Sciatic nerve (tissue), 2 donors: ENCODE measurements at regions of chr1 and their contacts with region 1.

Region 1: DNA sequence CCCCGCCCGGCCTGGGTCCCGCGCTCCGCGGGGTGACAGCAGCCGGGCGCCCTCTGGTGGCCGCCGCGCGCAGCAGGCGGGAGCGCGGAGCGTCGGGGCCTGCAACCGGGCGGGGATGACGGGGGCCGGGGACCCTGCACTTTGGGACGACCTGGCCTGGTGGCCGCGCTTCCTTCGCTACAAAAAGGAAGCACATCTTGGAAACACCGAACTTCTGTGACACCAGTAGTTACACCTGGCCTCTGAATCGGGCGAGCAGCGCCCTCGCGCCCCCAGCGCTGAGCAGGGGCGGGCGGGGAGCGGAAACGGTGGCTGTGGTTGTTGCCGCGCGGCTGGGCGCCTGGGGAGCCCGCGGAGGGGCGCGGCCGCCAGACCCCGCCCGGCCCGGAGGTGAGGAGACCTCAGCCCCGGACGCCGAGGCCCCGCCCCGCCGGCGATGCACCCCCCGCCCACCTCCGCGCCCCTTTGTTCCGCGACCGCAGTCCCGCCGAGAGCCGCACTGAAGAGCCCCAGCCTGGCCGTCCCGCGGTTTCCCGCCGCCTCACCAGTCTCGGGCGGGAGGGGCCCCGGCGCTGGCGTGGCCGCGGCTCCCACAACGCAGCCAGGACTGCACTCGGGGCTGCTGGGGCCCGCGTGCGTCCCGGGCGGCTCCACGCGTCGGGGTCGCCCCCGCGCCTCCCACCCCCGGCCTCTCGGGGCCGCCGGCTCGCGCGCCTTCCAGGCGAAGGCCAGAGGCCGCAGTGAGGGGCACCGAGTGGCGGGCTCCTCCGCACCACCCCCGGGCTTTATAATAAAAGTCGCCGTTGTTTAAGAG is 59.3 kb downstream of the H3-3A start:
- DNase-seq: peak; percentile 82
- ATAC-seq: peak; percentile 73

Region 2: GRCh38 chr1:225999227-225999911 is 122.4 kb before region 1 on chr1 and contains the start of gene SDE2:
- intact Hi-C with region 1: no loop called
- DNase-seq: peak; percentile 100
- ATAC-seq: peak; percentile 99
- total RNA-seq, gene SDE2: 22.3 TPM

Region 3: GRCh38 chr1:226064816-226065248 is 57.0 kb before region 1 on chr1:
- intact Hi-C with region 1: loop called (anchors 5 kb)
- DNase-seq: no peak
- ATAC-seq: no peak

Region 4: DNA sequence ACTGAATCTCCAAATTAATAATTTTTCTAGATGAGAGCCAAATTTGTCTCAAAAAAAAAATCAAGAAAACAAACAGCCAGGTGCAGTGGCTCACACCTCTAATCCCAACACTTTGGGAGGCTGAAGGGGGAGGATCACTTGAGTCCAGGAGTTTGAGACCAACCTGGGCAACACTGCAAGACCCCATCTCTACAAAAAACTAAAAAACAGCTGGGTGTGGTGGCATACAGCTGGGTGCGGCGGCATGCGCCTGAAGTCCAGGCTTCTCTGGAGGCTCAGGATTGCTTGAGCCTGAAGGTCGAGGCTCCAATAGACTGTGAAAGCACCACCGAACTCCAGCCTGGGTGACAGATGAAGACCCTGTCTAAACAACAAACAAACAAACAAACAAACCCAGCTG is 50.8 kb after region 1 on chr1:
- intact Hi-C with region 1: no loop called
- DNase-seq: no peak
- ATAC-seq: no peak

Region 5: GRCh38 chr1:226186124-226187018 is 64.6 kb after region 1 on chr1 and contains the start of gene ACBD3:
- intact Hi-C with region 1: loop called (anchors 5 kb)
- DNase-seq: peak; percentile 94
- ATAC-seq: peak; percentile 97
- total RNA-seq, gene ACBD3: 49.8 TPM